HepG2 (cell line): ENCODE measurements at regions of chr5 and their contacts with region 1.

Region 1: DNA sequence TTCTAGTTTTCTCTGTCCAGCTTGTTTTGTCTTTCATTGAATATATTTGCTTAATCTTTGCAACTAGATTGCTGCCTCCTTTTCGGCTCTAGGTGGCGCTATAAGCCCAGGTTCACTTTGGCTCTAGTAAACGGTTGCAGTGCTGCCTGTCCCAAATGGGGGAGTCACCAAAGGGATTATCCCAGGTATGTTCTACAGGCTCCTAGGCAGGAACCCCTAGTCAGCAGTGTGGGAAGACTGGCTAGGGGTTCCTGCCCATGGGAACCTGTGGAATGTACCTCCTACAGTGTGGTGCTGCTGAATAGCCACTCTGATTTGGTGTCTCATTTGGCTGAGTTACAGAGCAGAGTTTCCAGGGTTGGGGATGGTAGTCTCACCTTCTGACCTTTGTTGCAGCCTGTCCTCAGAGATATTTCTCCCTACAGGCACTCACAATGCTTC is 85.2 kb downstream of the ARSB start:
- DNase-seq: peak; percentile 58
- ATAC-seq: peak; percentile 86
- H3K4me3 ChIP-seq: no peak overlapping the region
- H3K27ac ChIP-seq: no peak overlapping the region
- H3K4me1 ChIP-seq: no peaks in the 10 kb centered on the region
- H3K27me3 ChIP-seq: no peaks in the 10 kb centered on the region
- CTCF ChIP-seq: peak; percentile 72
- EP300 ChIP-seq: no peak
- POLR2A ChIP-seq: no peak
- RAD21 ChIP-seq: peak; percentile 72

Region 2: DNA sequence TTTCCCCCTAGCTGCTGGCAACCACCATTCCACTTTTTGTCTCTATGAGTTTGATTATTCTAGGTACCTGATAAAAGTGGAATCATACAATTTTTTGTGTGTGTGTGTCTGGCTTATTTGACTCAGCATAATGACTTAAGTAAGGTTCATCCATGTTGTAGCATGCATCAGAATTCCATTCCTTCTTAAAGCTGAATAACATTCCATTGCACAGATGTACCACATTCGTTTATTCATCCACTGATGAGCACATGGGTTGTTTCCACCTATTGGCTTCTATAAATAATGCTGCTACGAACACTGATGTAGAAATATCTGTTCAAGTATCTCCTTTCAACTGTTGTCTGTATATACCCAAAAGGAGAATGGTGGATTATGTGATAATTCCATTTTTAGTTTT is 639.2 kb before region 1 on chr5:
- CTCF ChIA-PET with region 1: no interaction called
- POLR2A ChIA-PET with region 1: no interaction called
- in situ Hi-C with region 1: no loop called
- intact Hi-C with region 1: no loop called
- DNase-seq: no peak
- ATAC-seq: no peak
- H3K4me3 ChIP-seq: no peak overlapping the region
- H3K27ac ChIP-seq: no peak overlapping the region
- H3K4me1 ChIP-seq: no peaks in the 10 kb centered on the region
- H3K27me3 ChIP-seq: no peaks in the 10 kb centered on the region
- CTCF ChIP-seq: no peak
- EP300 ChIP-seq: no peak
- POLR2A ChIP-seq: no peak
- RAD21 ChIP-seq: no peak

Region 3: DNA sequence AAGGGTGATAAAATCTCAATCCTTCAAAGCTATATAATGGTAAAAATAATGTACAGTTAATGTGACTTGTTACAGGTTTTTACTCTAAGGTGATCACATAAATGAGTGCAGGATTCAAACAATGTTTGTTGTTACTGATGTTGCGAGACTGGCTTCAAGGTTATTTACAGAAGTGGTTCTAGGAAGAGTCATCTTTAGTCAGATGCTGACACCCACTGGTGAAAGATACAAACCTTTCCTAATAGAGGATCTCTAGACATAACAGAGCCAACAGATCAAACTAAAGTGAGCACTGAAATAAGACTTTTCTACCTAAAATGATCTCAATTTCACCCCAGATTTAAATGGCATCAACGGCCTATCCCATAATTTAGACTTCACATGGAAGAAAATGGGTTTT is 64.9 kb after region 1 on chr5:
- CTCF ChIA-PET with region 1: interaction called, 6 read pairs
- POLR2A ChIA-PET with region 1: no interaction called
- in situ Hi-C with region 1: loop called (anchors 5 kb)
- intact Hi-C with region 1: loop called (anchors 1 kb)
- DNase-seq: peak; percentile 69
- ATAC-seq: peak; percentile 82
- H3K4me3 ChIP-seq: no peak overlapping the region
- H3K27ac ChIP-seq: no peak overlapping the region
- H3K4me1 ChIP-seq: peaks cover 10% of the 10 kb centered on the region
- H3K27me3 ChIP-seq: no peaks in the 10 kb centered on the region
- CTCF ChIP-seq: peak; percentile 73
- EP300 ChIP-seq: no peak
- POLR2A ChIP-seq: no peak
- RAD21 ChIP-seq: no peak